Dorsolateral prefrontal cortex (tissue), 120 donors: ENCODE measurements at regions of chr19 and their contacts with region 1.

Region 1: DNA sequence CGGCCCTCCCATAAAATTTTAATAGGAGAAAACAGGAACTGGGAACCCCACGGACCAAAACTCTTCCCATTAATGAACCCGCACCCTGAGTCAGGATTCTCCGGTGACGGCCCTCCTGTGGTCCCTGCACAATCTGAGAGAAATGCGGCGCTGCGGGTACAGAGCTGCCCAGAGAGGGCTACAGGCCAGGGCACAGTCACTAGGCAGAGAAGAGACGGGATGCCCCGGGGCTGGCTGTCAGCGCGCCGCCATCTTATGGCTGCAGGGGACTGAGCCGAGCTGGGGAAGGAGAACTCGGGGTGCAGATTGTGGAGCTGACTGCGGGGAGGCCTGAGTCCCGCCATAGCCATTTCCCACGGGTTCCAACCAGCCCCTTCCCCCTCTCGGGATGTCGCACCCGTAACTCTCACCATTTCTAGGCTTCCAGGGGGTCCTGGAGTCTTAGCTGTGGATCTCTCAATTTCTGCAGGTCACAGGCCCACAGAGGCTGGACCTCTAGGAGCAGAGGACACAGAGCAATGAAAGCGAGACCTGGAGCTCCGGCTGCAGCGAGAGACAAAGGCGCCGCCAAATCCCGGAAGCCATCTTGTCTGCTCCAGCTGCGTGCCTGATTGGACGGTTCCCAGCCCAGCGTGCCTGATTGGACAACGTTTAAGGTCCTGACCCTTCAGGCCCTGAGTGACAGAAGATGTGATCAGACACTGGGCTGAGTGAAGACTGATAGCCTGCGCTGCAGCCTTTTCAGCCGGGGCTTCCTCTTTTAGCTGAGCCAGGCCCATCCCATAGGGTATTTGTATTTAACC is at the start of gene ZNF675:
- DNase-seq: peak; percentile 85 to 97 (median 94)
- H3K4me3 ChIP-seq: peak within 1 kb of the TSS; percentile 66 to 98 (median 82)
- H3K27ac ChIP-seq: peak within 1 kb of the TSS; percentile 55 to 95 (median 87)
- H3K27me3 ChIP-seq: no peaks in the 10 kb centered on the region
- CTCF ChIP-seq: peak in 12 of 56 donors; percentile 4 to 22 (median 14)
- total RNA-seq, gene ZNF675: 14.5 to 37.6 (median 25.7) TPM

Region 2: DNA sequence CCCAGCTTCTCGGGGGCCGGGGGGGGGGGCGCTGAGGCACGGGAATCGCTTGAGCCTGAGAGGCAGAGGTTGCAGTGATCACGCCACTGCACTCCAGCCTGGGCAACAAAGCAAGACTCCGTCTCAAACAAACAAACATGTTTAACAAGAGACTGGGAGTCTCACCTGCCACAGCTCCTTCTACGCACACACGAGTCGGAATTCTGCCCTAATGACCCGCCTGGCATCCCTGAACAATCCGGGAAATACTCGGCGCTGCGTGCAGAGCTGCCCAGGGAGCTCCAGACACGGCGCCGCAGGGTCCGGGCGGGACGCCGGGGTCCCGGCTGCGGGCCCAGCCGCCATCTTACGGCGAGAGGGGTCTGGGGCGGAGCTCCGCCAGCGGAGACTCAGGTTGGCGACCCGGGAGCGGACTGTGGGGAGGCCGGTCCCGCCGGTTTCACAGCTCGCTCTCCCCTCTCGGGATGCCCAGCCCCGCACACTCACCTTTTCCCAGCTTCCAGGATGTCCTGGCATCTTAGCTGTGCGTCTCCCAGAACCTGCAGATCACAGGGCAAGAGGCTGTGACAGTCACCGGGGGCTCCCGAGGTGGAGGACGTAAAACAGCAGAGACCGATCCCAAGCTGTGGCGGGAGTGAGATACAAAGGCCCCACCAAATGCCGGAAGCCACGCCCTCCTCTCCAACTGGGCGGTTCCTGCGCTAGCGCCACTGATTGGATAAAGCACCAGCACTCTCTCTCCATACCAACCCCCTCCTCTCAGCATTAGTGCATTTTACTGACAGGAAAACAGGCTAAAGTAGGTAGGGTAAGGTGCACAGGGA is 413.0 kb before region 1 on chr19:
- intact Hi-C with region 1: loop called (anchors 10 kb)
- DNase-seq: peak; percentile 86 to 96 (median 94)
- H3K4me3 ChIP-seq: peak overlapping the region; percentile 67 to 100 (median 96)
- H3K27ac ChIP-seq: peak overlapping the region; percentile 26 to 96 (median 89)
- H3K27me3 ChIP-seq: no peaks in the 10 kb centered on the region
- CTCF ChIP-seq: peak in 20 of 56 donors; percentile 2 to 44 (median 14)

Region 3: GRCh38 chr19:23395041-23395721 is 291.6 kb before region 1 on chr19 and contains the start of gene ZNF91:
- intact Hi-C with region 1: loop called (anchors 2 to 10 kb)
- DNase-seq: peak; percentile 90 to 99 (median 98)
- H3K4me3 ChIP-seq: peak within 1 kb of the TSS; percentile 59 to 98 (median 88)
- H3K27ac ChIP-seq: peak within 1 kb of the TSS; percentile 58 to 98 (median 91)
- H3K27me3 ChIP-seq: no peaks in the 10 kb centered on the region
- CTCF ChIP-seq: peak in 13 of 56 donors; percentile 7 to 41 (median 17)
- total RNA-seq, gene ZNF91: 86.8 to 280 (median 171) TPM

Region 4: DNA sequence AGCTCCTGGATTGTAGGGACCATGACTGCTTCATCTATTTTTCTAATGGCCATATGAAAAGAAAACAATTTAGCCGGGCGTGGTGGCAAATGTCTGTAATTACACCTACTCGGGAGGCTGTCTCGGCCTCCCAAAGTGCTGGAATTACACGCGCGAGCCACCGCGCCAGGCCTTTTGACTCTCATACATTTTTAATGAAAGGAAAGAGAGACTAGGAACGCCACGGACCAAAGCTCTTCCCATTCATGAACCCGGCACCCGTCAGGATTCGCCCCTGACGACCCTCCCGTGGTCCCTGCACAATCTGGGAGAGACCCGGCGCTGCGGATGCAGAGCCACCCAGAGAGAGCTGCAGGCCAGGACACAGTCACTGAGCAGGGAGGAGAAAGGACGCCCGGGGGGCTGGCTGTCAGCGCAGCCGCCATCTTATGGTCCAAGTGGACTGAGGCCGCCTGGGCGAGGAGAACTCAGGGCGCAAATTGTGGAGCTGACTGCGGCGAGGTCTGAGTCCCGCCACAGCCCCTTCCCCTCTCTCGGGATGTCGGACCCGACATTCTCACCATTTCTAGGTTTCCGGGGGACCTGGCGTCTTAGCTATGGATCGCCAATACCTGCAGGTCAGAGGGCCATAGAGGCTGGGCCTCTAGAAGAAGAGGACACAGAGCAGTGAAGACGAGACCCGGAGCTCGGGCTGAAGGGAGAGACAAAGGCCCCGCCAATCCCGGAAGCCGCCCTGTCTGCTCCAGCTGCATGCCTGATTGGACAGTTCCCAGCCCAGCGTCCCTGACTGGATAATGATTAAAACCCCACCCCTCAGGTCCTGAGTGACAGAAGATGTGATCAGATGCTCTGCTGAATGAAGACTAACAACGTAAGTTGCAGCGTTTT is 71.6 kb after region 1 on chr19 and contains the start of gene ZNF681:
- intact Hi-C with region 1: loop called in 1 of 2 experiments (anchors 2 kb)
- DNase-seq: peak; percentile 72 to 97 (median 92)
- H3K4me3 ChIP-seq: peak within 1 kb of the TSS; percentile 57 to 92 (median 78)
- H3K27ac ChIP-seq: peak within 1 kb of the TSS in 52 of 59 donors; percentile 7 to 89 (median 64)
- H3K27me3 ChIP-seq: no peaks in the 10 kb centered on the region
- CTCF ChIP-seq: peak in 4 of 56 donors; percentile 2 to 11 (median 5)
- total RNA-seq, gene ZNF681: 1.8 to 10.5 (median 4.8) TPM

Region 5: GRCh38 chr19:23774524-23774971 is 87.7 kb after region 1 on chr19:
- intact Hi-C with region 1: no loop called
- DNase-seq: no peak
- H3K4me3 ChIP-seq: no peak overlapping the region
- H3K27ac ChIP-seq: no peak overlapping the region
- H3K27me3 ChIP-seq: no peaks in the 10 kb centered on the region
- CTCF ChIP-seq: no peak

Region 6: DNA sequence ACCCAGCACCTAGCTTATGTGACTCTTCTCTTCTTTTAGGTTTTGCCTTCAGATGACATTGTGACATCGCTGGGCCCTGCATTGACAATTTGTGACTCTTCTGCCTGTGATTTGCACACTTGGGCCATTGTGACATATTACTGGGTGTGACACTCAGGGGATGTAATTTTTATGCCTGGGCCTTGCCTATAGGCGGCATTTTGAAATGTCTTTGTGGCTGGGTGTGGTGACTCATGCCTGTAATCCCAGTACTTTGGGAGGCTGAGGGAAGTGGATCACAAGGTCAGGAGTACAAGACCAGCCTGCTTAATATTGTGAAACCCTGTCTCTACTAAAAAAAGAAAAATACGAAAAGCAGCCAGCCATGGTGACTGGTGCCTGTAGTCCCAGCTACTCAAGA is 100.3 kb after region 1 on chr19:
- intact Hi-C with region 1: no loop called
- DNase-seq: no peak
- H3K4me3 ChIP-seq: no peak overlapping the region
- H3K27ac ChIP-seq: no peak overlapping the region
- H3K27me3 ChIP-seq: no peaks in the 10 kb centered on the region
- CTCF ChIP-seq: no peak

Region 7: DNA sequence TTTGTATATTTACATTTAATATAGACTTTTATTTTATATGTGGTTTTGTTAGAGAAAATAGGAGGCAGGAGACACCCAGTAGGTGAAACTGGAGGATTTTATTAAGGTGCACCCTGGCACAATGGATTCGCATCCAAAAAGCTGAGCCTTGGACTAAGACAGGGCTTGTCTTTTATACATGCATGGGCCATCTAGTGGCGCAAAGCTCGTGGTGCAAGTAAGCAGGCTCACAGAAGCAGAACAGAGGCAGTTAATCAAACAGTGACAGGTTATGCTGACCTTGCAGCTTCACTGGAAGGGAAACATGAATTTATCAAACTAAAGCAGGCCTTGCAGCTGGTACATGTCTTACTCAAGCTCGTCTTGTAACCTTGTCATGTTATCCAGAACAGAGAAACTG is 130.7 kb after region 1 on chr19:
- intact Hi-C with region 1: no loop called
- DNase-seq: peak in 1 of 10 donors; percentile 30
- H3K4me3 ChIP-seq: no peak overlapping the region
- H3K27ac ChIP-seq: no peak overlapping the region
- H3K27me3 ChIP-seq: no peaks in the 10 kb centered on the region
- CTCF ChIP-seq: peak in 22 of 56 donors; percentile 7 to 40 (median 20)